Activated CD8-positive, alpha-beta memory T cell treated with anti-CD3 and anti-CD28 coated beads, Interleukin-2, amount 10 ng/mL, durations not matched to agents 7 days and 5 days (primary cell): ENCODE measurements at regions of chr18 and their contacts with region 1.

Region 1: GRCh38 chr18:58135701-58136331 is 91.8 kb downstream of the NEDD4L start:
- DNase-seq: peak; percentile 63
- ATAC-seq: peak; percentile 64
- H3K4me3 Mint-ChIP-seq: no peak overlapping the region
- H3K27ac Mint-ChIP-seq: no peak overlapping the region
- H3K4me1 Mint-ChIP-seq: peaks cover 9% of the 10 kb centered on the region
- H3K27me3 Mint-ChIP-seq: peaks cover 4% of the 10 kb centered on the region

Region 2: GRCh38 chr18:58043491-58044379 is 92.1 kb before region 1 on chr18 and contains the start of gene NEDD4L:
- CTCF ChIA-PET with region 1: interaction called, 12 read pairs
- DNase-seq: peak; percentile 83
- ATAC-seq: peak; percentile 90
- H3K4me3 Mint-ChIP-seq: peak within 1 kb of the TSS; percentile 77
- H3K27ac Mint-ChIP-seq: no peak within 1 kb of the TSS
- H3K4me1 Mint-ChIP-seq: peaks cover 19% of the 10 kb centered on the region
- H3K27me3 Mint-ChIP-seq: peaks cover 60% of the 10 kb centered on the region
- total RNA-seq, gene NEDD4L: 1.4 to 4.2 TPM

Region 3: DNA sequence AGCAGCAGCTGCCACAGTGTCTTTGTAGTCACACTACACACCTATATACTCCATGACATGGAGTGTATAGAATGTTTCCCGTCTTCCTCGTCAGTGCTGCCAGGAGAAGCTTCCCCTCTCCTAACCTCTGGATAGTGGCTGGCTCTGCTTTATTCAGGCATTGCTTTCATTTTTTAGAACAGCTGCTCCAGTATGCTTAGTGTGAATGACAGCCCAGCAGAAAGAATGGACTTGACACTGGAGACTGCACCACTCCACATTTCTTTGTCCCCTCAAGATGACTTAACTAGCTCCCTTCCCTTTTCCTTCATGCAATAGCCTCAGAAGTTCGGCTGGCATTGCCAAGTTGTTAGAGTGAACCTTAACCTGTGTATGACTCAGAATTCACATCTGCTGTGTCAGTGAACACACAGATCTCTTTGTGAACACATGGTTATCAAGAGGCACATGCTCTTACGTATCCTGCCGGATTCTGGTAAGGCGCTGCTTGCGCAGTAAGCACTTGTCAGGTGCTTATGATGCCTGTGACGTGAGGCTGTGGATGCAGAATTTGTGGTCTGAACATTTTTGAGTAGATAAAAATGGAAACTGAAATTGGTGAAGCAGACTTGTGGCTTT is 17.9 kb before region 1 on chr18:
- CTCF ChIA-PET with region 1: interaction called, 14 read pairs
- DNase-seq: no peak
- ATAC-seq: no peak
- H3K4me3 Mint-ChIP-seq: no peak overlapping the region
- H3K27ac Mint-ChIP-seq: no peak overlapping the region
- H3K4me1 Mint-ChIP-seq: peaks cover 5% of the 10 kb centered on the region
- H3K27me3 Mint-ChIP-seq: peaks cover 10% of the 10 kb centered on the region

Region 4: DNA sequence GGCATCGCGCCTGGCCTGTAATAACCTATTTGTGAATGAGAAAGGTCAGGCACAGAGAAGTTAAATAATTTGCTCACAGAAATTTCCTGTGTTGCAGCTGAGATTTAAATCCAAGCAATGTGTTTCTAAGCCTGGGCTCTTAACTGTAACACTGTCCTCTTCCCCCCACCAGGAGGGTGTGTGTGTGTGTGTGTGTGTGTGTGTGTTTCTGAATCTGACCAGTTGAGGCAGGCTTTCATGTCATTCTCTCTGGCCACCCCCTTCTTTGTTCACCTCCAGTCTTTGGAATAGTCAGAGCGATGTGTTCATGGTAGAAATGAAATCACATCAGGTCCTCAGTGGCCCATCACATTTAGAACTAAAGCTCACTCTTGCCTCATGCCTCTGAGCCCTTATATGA is 10.6 kb before region 1 on chr18:
- CTCF ChIA-PET with region 1: interaction called, 14 read pairs
- DNase-seq: no peak
- ATAC-seq: no peak
- H3K4me3 Mint-ChIP-seq: no peak overlapping the region
- H3K27ac Mint-ChIP-seq: no peak overlapping the region
- H3K4me1 Mint-ChIP-seq: peaks cover 5% of the 10 kb centered on the region
- H3K27me3 Mint-ChIP-seq: no peaks in the 10 kb centered on the region

Region 5: GRCh38 chr18:58241877-58242276 is 106.1 kb after region 1 on chr18:
- CTCF ChIA-PET with region 1: no interaction called
- DNase-seq: no peak
- ATAC-seq: no peak
- H3K4me3 Mint-ChIP-seq: no peak overlapping the region
- H3K27ac Mint-ChIP-seq: no peak overlapping the region
- H3K4me1 Mint-ChIP-seq: no peaks in the 10 kb centered on the region
- H3K27me3 Mint-ChIP-seq: no peaks in the 10 kb centered on the region